ENCODE measurements at regions of chr19 and their contacts with region 1.

Region 1: GRCh38 chr19:4208385-4209094 is 20.8 kb upstream of the EBI3 start:
- DNase-seq: no peak
- ATAC-seq: no peak
- H3K4me3 ChIP-seq: no peak overlapping the region
- H3K27ac ChIP-seq: no peak overlapping the region
- H3K4me1 ChIP-seq: peaks cover 3% of the 10 kb centered on the region
- H3K27me3 ChIP-seq: peaks cover 0 to 11% (median 3%) of the 10 kb centered on the region in 3 donors
- CTCF ChIP-seq: peak; percentile 13

Region 2: DNA sequence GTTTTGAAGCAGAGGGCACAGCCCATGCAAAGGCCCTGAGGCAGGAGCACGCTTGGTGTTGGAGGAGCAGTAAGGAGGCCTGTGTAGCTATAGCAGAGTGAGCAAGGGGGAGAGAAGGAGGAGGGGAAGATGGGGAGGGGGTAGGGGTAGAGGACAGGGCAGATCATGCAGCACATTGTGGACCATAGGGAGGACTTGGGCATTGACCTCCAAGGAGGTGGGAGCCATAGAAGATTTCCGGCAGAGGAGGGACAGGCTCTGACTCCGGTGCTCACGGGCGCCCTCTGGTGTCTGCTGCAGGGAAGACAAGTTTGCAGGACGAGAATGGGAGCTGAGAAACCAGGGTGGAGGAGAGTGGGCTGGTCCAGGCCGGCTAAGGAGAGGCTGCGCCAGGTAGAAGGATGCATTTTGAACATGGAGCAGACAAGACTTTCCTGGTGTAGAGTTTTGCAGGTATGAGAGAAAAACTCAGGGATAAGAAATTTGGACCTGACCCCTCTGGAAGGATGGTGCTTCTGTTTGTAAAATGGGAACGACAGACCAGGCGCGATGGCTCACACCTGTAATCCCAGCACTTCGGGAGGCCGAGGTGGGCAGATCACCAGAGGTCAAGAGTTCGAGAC is 68.8 kb before region 1 on chr19:
- intact Hi-C with region 1: loop called in 1 of 2 experiments (anchors 5 kb)
- DNase-seq: peak; percentile 81 to 87
- ATAC-seq: peak; percentile 58 to 94 (median 86)
- H3K4me3 ChIP-seq: no peak overlapping the region
- H3K27ac ChIP-seq: no peak overlapping the region
- H3K4me1 ChIP-seq: no peaks in the 10 kb centered on the region
- H3K27me3 ChIP-seq: peaks cover 0 to 2% (median 0%) of the 10 kb centered on the region in 3 donors
- CTCF ChIP-seq: peak; percentile 68

Region 3: DNA sequence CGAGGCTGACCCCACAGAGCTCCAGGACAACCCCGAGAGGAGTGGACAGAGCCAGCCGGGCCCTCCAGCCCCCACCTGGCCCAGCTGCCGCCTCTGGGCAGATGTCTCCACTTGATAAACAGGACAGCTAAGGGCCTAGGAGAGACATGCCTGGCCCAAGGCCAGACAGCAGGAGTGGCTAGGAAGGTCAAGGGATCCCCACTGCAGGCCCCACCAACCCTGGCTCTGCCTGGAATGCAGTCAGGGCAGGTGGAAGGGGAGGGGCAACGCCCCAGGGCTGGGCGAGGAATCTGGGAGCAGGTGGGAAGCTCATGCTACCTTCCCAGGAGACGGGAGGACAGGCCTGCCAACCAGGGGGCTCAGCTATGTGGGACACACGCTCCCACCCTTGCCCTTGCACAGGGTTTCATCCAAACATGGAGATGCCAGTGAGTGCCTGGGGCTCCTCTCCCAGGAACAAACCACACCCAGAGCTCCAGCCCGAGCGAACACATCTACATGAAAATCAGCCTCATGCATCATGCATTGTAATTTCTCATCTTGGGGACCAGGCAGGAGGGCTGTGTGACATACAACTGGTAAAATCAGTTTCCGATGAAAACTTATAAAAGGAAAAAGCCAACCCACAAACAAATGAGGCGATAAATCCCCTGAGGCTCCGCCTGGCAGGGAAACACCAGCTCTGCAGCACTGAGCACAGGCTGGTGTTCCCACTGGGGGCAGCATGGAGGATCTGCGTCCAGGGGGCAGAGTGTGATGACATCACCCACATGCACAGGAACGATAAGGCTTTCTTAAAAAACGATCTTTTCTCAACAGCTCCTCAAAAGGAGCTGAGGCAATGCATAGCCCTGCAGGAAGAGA is 166.9 kb after region 1 on chr19:
- intact Hi-C with region 1: no loop called
- DNase-seq: peak; percentile 42 to 71
- ATAC-seq: no peak
- H3K4me3 ChIP-seq: peak overlapping the region; percentile 22
- H3K27ac ChIP-seq: peak overlapping the region; percentile 85
- H3K4me1 ChIP-seq: peaks cover 98% of the 10 kb centered on the region
- H3K27me3 ChIP-seq: no peaks in the 10 kb centered on the region
- CTCF ChIP-seq: peak; percentile 10